Activated CD8-positive, alpha-beta T cell treated with anti-CD3 and anti-CD28 coated beads for 36 hours (primary cell): ENCODE measurements at regions of chr2 and their contacts with region 1.

Region 1: DNA sequence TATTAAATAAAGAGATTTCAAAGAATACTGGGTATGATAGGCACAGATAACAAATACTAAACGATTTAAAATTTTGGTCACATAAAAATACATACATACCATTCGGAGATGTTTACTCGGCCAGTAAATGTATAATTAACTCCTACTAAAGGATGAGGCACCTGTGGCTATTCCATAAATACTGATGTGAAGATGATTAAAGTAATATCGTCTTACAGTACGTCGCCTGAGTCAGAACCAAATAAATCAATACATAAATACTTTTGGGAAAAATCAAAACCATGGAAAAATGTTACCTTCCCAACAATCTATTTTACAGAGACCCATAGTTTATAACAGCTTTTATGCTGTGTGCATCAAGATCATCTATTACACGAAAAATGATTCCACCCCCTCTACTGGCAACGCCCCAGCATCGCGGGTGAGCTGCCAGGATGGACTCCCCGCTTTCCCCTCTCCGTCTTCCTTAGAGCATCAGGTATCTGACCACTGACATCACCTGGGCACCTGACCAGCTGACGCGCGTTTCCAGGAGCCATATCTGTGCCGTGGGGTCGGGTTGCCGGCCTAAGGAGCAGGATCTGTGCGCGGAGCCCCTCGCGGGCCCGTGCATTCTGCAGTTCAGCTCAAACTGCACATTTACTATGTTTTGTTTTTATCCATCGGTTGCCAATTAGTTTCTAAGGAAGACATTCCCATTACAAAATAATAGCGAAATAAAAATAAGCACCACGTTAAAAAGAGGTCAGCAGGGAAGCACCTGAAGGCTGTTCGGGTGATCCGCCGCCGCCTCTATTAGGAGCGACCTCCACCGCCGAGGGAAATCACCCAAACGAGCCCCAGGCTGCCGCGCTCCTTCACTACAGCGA is 901 bp downstream of the ICA1L start:
- DNase-seq: peak; percentile 80
- ATAC-seq: peak; percentile 83
- H3K4me3 Mint-ChIP-seq: peak overlapping the region; percentile 82
- H3K27ac Mint-ChIP-seq: peak overlapping the region; percentile 75
- H3K4me1 Mint-ChIP-seq: peaks cover 9% of the 10 kb centered on the region
- H3K27me3 Mint-ChIP-seq: no peaks in the 10 kb centered on the region
- CTCF ChIP-seq: peak; percentile 77

Region 2: DNA sequence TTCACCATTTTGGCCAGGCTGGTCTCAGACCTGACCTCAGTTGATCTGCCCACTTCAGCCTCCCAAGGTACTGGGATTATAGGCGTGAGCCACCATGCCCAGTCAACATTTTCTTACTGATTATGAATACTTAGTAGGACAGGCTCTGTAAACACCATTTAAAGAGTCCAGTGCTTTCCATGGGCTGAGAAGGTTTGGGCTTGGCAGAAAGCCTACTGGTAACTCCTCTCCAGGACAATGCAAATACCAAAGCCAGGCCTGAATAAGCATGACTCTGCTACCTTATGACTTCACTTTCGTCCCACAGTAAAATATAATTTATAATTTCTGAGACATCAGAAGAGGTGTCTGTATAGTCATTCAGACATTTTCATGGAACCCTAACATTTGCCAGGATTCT is 296.1 kb before region 1 on chr2:
- CTCF ChIA-PET with region 1: interaction called, 3 read pairs
- POLR2A ChIA-PET with region 1: no interaction called
- intact Hi-C with region 1: loop called (anchors 5 kb)
- DNase-seq: no peak
- ATAC-seq: no peak
- H3K4me3 Mint-ChIP-seq: no peak overlapping the region
- H3K27ac Mint-ChIP-seq: no peak overlapping the region
- H3K4me1 Mint-ChIP-seq: no peaks in the 10 kb centered on the region
- H3K27me3 Mint-ChIP-seq: no peaks in the 10 kb centered on the region
- CTCF ChIP-seq: no peak

Region 3: GRCh38 chr2:202771741-202772460 is 98.8 kb before region 1 on chr2:
- CTCF ChIA-PET with region 1: no interaction called
- POLR2A ChIA-PET with region 1: no interaction called
- intact Hi-C with region 1: no loop called
- DNase-seq: no peak
- ATAC-seq: no peak
- H3K4me3 Mint-ChIP-seq: no peak overlapping the region
- H3K27ac Mint-ChIP-seq: no peak overlapping the region
- H3K4me1 Mint-ChIP-seq: peaks cover 11% of the 10 kb centered on the region
- H3K27me3 Mint-ChIP-seq: no peaks in the 10 kb centered on the region
- CTCF ChIP-seq: no peak